ENCODE measurements at regions of chr1 and their contacts with region 1.

Region 1: DNA sequence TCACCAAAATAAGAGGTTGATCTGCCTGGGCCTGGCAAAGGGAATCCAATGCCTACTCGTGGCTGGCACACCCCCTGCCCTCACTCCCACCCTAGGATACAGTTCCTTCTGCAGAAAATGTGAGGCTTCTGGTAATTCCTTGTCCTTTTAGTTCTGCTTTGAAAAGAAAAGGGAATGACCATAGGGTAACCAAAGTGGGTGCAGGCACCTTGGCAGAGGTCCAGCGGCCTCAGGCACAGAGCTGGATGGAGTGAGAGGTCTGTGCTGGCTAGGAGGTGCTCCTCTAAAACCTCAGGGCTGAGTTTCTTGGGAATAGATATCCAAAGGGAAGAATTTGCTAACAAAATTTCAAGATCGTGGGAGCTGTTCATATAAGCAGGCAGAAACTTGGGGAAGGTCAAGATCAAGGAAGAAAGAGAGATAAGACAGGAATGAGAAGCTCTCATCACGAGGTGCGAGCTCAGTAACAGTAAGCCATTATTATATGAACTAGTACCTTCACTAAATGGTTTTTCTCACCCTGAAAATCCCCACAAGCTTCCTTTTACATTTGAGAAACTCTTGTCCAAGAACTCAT is 293.1 kb upstream of the LYPLAL1 start:
- DNase-seq: no peak
- ATAC-seq: no peak

Region 2: GRCh38 chr1:218829099-218829498 is 51.5 kb before region 1 on chr1:
- intact Hi-C with region 1: no loop called
- DNase-seq: no peak
- ATAC-seq: no peak

Region 3: DNA sequence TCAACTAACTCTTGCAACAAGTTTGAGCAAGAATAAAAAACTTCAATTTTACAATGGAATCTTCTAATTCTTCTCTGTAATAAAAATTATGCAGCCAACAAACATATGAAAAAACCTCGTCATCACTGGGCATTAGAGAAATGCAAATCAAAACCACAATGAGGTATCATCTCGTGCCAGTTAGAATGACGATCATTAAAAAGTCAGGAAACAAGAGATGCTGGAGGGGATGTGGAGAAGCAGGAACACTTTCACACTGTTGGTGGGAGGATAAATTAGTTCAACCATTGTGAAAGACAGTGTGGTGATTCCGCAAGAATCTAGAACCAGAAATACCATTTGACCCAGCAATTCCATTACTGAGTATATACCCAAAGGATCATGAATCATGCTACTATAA is 34.4 kb before region 1 on chr1:
- intact Hi-C with region 1: no loop called
- DNase-seq: no peak
- ATAC-seq: no peak

Region 4: DNA sequence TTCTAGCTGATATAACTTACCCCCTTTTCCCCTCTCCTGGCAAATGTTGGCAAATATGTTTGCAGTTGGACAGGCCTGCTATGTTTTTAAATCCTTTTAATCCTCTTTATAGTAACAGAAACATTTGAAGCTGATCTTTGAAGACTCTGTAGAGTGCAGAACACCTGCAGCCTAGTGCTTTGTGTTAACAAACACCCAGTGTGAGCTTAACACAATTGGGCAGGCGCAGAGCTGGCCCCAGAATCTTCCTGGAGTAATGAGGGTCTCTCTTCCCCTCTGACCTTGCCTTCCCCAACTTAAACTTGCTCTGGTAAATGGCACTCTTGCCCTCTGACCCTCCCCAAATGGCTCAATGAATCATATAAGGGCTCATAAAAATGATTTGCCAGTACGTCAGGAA is 45.2 kb after region 1 on chr1:
- intact Hi-C with region 1: loop called (anchors 1 kb)
- DNase-seq: no peak
- ATAC-seq: no peak

Measured in sciatic nerve (tissue), 2 donors.